Activated CD4-positive, alpha-beta T cell treated with anti-CD3 and anti-CD28 coated beads for 36 hours (primary cell): ENCODE measurements at regions of chr1 and their contacts with region 1.

Region 1: GRCh38 chr1:89843281-89844121 is 22.7 kb downstream of the LRRC8D start:
- DNase-seq: peak; percentile 92
- ATAC-seq: peak; percentile 79
- H3K4me3 Mint-ChIP-seq: peak overlapping the region; percentile 94
- H3K27ac Mint-ChIP-seq: peak overlapping the region; percentile 97
- H3K4me1 Mint-ChIP-seq: peaks cover 59% of the 10 kb centered on the region
- H3K27me3 Mint-ChIP-seq: no peaks in the 10 kb centered on the region

Region 2: DNA sequence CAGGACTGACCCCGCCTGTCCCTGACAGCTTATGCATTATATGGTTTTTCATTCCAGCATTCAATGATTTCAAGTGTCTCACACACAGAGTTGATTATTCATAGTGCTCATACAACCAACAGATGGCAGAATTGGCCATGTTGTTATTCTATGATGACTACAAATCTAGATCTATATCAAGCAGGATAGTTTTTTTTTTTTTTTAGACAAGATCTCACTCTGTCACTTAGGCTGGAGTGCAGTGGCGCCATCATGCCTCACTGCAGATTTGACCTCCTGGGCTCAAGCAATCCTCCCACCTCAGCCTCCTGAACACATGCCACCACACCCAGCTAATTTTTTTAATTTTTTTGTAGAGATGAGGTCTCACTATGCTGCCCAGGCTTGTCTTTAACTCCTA is 62.8 kb before region 1 on chr1:
- CTCF ChIA-PET with region 1: interaction called, 4 read pairs
- POLR2A ChIA-PET with region 1: interaction called, 3 read pairs
- intact Hi-C with region 1: loop called (anchors 1 kb)
- DNase-seq: peak; percentile 59
- ATAC-seq: peak; percentile 73
- H3K4me3 Mint-ChIP-seq: peak overlapping the region; percentile 48
- H3K27ac Mint-ChIP-seq: peak overlapping the region; percentile 86
- H3K4me1 Mint-ChIP-seq: peaks cover 44% of the 10 kb centered on the region
- H3K27me3 Mint-ChIP-seq: no peaks in the 10 kb centered on the region

Region 3: GRCh38 chr1:89820422-89821321 is 22.8 kb before region 1 on chr1 and contains the start of gene LRRC8D:
- CTCF ChIA-PET with region 1: interaction called, 18 read pairs
- POLR2A ChIA-PET with region 1: interaction called, 9 read pairs
- intact Hi-C with region 1: loop called (anchors 1 kb)
- DNase-seq: peak; percentile 83
- ATAC-seq: peak; percentile 84
- H3K4me3 Mint-ChIP-seq: peak within 1 kb of the TSS; percentile 82
- H3K27ac Mint-ChIP-seq: peak within 1 kb of the TSS; percentile 69
- H3K4me1 Mint-ChIP-seq: peaks cover 34% of the 10 kb centered on the region
- H3K27me3 Mint-ChIP-seq: no peaks in the 10 kb centered on the region
- total RNA-seq, gene LRRC8D: 24.3 to 30.0 TPM

Region 4: DNA sequence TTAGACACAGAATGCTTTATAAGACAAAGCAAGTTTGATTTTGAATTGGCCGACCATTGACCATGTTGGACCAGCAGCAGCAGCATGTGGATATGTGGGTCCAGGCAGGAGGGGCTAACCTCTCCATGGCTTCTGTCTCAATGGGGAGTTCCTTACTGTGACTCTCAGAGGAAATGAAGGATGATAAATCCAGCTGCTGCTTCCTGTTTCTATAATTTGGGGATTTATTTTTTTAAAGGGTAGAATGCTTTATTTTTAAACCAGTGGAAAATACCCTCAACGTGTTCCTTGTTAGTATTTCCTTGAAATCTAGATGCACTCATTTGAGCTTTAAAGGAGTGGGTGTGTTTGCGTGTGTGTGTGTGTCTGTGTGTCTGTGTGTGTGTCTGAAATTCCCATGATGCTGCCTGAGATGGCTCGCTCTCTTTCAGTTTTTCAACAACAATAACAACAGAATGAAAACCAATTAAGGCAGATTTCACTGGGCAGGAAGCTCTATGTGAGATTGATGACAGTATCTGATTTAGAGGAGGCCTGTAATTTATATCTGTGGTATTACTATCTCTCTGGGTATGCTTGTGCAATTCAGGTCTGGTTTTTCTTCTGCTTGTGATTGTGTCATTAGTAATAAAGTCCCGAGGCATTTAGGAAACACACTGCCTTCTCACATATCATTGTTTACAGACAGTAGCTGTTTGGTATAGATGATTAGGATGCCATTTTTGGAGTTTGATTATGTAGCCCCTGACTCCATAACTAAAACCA is 65.4 kb after region 1 on chr1:
- CTCF ChIA-PET with region 1: interaction called, 3 read pairs
- POLR2A ChIA-PET with region 1: no interaction called
- intact Hi-C with region 1: loop called in 1 of 2 experiments (anchors 5 kb)
- DNase-seq: no peak
- ATAC-seq: no peak
- H3K4me3 Mint-ChIP-seq: no peak overlapping the region
- H3K27ac Mint-ChIP-seq: peak overlapping the region; percentile 64
- H3K4me1 Mint-ChIP-seq: peaks cover 53% of the 10 kb centered on the region
- H3K27me3 Mint-ChIP-seq: no peaks in the 10 kb centered on the region

Region 5: GRCh38 chr1:89953072-89953626 is 109.6 kb after region 1 on chr1:
- CTCF ChIA-PET with region 1: no interaction called
- POLR2A ChIA-PET with region 1: no interaction called
- intact Hi-C with region 1: loop called in 1 of 2 experiments (anchors 1 kb)
- DNase-seq: peak; percentile 65
- ATAC-seq: peak; percentile 76
- H3K4me3 Mint-ChIP-seq: no peak overlapping the region
- H3K27ac Mint-ChIP-seq: no peak overlapping the region
- H3K4me1 Mint-ChIP-seq: peaks cover 25% of the 10 kb centered on the region
- H3K27me3 Mint-ChIP-seq: no peaks in the 10 kb centered on the region

Region 6: GRCh38 chr1:89994805-89995597 is 151.5 kb after region 1 on chr1 and contains the start of gene ZNF326:
- CTCF ChIA-PET with region 1: interaction called, 3 read pairs
- POLR2A ChIA-PET with region 1: interaction called, 3 read pairs
- intact Hi-C with region 1: loop called (anchors 1 to 2 kb)
- DNase-seq: peak; percentile 97
- ATAC-seq: peak; percentile 95
- H3K4me3 Mint-ChIP-seq: peak within 1 kb of the TSS; percentile 94
- H3K27ac Mint-ChIP-seq: peak within 1 kb of the TSS; percentile 92
- H3K4me1 Mint-ChIP-seq: peaks cover 42% of the 10 kb centered on the region
- H3K27me3 Mint-ChIP-seq: no peaks in the 10 kb centered on the region
- total RNA-seq, gene ZNF326: 19.4 to 20.5 TPM